ENCODE measurements at regions of chr11 and their contacts with region 1.

Region 1: GRCh38 chr11:117026593-117027330 is 71.5 kb downstream of the SIK3 start:
- DNase-seq: no peak
- H3K4me3 Mint-ChIP-seq: peak overlapping the region; percentile 13
- H3K27ac Mint-ChIP-seq: peak overlapping the region; percentile 79
- H3K4me1 Mint-ChIP-seq: peaks cover 69% of the 10 kb centered on the region
- H3K27me3 Mint-ChIP-seq: no peaks in the 10 kb centered on the region

Region 2: DNA sequence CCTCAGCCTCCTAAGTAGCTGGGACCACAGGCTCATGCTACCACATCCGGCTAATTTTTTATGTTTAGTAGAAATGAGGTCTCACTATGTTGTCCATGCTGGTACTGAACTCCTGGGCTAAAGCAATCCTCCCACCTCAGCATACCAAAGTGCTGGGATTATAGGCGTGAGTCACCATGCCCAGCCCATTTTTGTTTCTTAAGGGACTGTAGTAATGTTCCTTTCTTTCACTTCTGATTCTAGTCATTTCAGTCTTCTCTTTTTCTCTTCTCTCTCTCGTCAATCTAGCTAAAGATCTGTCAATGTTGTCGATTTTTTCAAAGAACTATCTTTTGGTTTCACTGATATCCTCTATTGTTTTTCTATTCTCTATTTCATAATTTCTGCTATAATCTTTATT is 78.4 kb before region 1 on chr11:
- CTCF ChIA-PET with region 1: no interaction called
- POLR2A ChIA-PET with region 1: no interaction called
- intact Hi-C with region 1: loop called (anchors 1 kb)
- DNase-seq: peak; percentile 68
- H3K4me3 Mint-ChIP-seq: no peak overlapping the region
- H3K27ac Mint-ChIP-seq: no peak overlapping the region
- H3K4me1 Mint-ChIP-seq: peaks cover 41% of the 10 kb centered on the region
- H3K27me3 Mint-ChIP-seq: no peaks in the 10 kb centered on the region

Region 3: GRCh38 chr11:117010808-117011540 is 15.8 kb before region 1 on chr11:
- CTCF ChIA-PET with region 1: interaction called, 7 read pairs
- POLR2A ChIA-PET with region 1: interaction called, 17 read pairs
- intact Hi-C with region 1: loop called (anchors 1 kb)
- DNase-seq: no peak
- H3K4me3 Mint-ChIP-seq: no peak overlapping the region
- H3K27ac Mint-ChIP-seq: peak overlapping the region; percentile 84
- H3K4me1 Mint-ChIP-seq: peaks cover 51% of the 10 kb centered on the region
- H3K27me3 Mint-ChIP-seq: no peaks in the 10 kb centered on the region

Region 4: GRCh38 chr11:117058761-117059261 is 32.0 kb after region 1 on chr11:
- CTCF ChIA-PET with region 1: interaction called, 4 read pairs
- POLR2A ChIA-PET with region 1: interaction called, 13 read pairs
- intact Hi-C with region 1: loop called (anchors 1 kb)
- DNase-seq: no peak
- H3K4me3 Mint-ChIP-seq: no peak overlapping the region
- H3K27ac Mint-ChIP-seq: no peak overlapping the region
- H3K4me1 Mint-ChIP-seq: peaks cover 59% of the 10 kb centered on the region
- H3K27me3 Mint-ChIP-seq: no peaks in the 10 kb centered on the region

Region 5: DNA sequence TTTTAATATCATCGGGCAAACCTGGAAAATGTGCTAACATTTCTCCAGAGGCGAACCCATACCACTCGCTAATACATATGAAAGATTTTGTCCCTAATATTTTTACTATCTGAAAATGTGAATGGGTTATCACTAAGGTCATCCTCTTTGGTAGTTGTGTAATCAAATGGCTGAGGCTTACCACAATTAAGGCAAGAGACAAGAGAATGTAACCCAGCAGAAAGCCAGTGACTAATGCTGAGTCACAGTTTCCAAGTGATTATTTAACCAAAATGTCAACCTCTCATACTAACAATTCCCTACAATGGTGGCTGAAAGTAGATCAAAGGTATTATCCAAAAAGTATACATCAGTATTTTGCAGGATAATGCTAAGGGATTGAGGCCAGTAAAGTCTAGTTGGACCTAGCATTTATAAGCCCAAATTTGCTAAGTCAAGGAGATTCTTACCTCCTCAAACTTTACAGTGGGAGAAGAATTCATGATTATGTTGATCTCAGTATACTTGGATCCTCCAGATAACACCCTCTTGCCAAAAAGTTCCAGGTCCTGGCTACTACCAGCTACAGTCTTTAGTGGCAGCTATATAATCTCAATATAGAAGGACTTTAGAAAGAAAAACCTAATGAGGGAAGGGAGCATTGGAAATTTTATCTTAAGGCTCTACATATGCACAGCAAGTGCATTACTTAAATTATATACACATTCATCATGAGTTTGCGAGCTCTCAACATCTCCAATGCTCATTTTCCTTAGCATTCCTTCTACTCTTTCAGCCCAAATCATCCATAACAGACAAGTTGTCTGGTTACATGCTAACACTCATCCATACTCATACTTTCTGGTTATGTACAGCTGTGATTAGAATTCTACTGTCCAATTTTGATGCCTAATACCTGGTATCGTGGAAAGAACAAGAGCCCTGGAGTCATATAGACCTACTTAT is 46.0 kb after region 1 on chr11:
- CTCF ChIA-PET with region 1: no interaction called
- POLR2A ChIA-PET with region 1: interaction called, 8 read pairs
- intact Hi-C with region 1: loop called (anchors 1 kb)
- DNase-seq: no peak
- H3K4me3 Mint-ChIP-seq: peak overlapping the region; percentile 2
- H3K27ac Mint-ChIP-seq: no peak overlapping the region
- H3K4me1 Mint-ChIP-seq: peaks cover 70% of the 10 kb centered on the region
- H3K27me3 Mint-ChIP-seq: no peaks in the 10 kb centered on the region

Measured in activated CD4-positive, alpha-beta memory T cell treated with anti-CD3 and anti-CD28 coated beads for 36 hours (primary cell).